Activated CD8-positive, alpha-beta T cell treated with anti-CD3 and anti-CD28 coated beads for 36 hours (primary cell): ENCODE measurements at regions of chr20 and their contacts with region 1.

Region 1: GRCh38 chr20:32737371-32738223 is 5.7 kb downstream of the COMMD7 start:
- DNase-seq: peak; percentile 65
- ATAC-seq: peak; percentile 88
- H3K4me3 Mint-ChIP-seq: peak overlapping the region; percentile 27
- H3K27ac Mint-ChIP-seq: peak overlapping the region; percentile 89
- H3K4me1 Mint-ChIP-seq: peaks cover 38% of the 10 kb centered on the region
- H3K27me3 Mint-ChIP-seq: no peaks in the 10 kb centered on the region
- CTCF ChIP-seq: no peak

Region 2: GRCh38 chr20:32674362-32674789 is 63.2 kb before region 1 on chr20:
- CTCF ChIA-PET with region 1: interaction called, 14 read pairs
- POLR2A ChIA-PET with region 1: interaction called, 3 read pairs
- intact Hi-C with region 1: no loop called
- DNase-seq: peak; percentile 87
- ATAC-seq: peak; percentile 37
- H3K4me3 Mint-ChIP-seq: no peak overlapping the region
- H3K27ac Mint-ChIP-seq: peak overlapping the region; percentile 36
- H3K4me1 Mint-ChIP-seq: peaks cover 24% of the 10 kb centered on the region
- H3K27me3 Mint-ChIP-seq: no peaks in the 10 kb centered on the region
- CTCF ChIP-seq: peak; percentile 89